ENCODE measurements at regions of chr14 and their contacts with region 1.

Region 1: DNA sequence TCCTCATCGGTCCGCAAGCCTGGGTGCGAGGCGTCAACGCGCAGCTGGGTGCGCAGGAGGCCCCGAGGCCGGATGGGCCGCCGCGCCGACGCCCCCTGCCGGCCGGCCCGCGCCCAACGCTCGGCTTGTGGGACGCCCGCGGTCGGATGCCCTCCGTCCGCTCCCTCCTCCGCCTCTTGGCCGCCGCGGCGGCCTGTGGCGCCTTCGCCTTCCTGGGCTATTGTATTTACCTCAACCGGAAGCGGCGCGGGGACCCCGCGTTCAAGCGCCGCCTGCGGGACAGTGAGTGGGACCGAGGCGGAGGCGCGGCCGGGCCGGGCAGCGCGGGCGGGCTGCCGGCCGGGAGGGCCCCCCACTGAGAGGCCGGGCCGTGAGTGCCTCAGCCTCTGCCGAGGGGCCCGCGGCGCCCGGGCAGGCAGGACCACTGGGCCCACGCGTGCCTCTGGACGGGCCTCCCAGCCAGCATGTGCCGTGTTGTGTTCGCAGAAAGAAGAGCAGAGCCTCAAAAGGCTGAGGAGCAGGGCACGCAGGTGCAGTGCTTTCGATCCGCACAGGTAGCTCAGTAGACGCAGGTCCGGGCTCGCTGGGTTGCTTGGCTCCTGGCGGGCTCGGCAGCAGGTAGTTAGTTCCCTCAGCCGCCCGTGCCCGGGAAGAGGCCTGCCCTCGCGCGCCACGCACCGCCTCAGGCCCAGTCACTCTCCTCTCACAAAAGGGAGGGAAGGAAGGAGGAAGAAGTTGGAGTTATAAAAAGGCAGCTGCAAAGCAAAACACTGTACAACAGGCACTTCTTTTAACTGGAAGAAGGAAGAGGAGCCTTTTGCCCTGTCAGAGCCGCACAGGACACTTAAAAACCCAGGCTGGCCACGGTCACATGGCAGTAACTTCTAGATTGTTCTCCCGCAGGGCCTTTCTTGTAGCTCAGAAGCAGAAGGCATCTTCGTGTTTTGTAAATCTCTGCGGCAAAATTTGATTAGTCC is at the start of gene TOMM20L:
- DNase-seq: peak; percentile 50 to 82 (median 73)
- ATAC-seq: peak; percentile 82 to 88
- H3K4me3 Mint-ChIP-seq: peak within 1 kb of the TSS; percentile 78 to 94 (median 86)
- H3K27ac Mint-ChIP-seq: peak within 1 kb of the TSS; percentile 92 to 98 (median 95)
- H3K4me1 Mint-ChIP-seq: peaks cover 7 to 20% (median 12%) of the 10 kb centered on the region in 4 donors
- H3K27me3 Mint-ChIP-seq: no peaks in the 10 kb centered on the region
- polyA plus RNA-seq, gene TOMM20L: not detected

Region 2: DNA sequence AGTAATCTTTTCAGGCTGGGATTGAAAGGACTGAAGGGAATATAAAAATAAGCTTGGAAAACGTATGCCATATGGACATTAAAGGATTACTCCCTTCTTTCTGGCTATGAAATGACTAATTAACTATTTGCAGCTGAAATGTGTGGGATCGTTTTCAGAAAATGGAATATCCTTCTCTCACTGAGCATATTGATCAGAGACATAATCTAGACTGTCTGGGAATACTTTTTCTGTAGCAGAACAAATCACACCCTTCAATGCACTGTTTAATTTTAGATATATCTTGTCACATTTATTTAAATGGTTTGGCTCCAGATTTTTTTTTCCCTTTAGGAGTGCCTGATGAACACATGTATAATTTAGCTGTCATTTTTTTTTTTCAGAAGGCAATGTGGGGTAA is 206.9 kb before region 1 on chr14:
- POLR2A ChIA-PET with region 1: no interaction called
- DNase-seq: no peak
- ATAC-seq: no peak
- H3K4me3 Mint-ChIP-seq: no peak overlapping the region
- H3K27ac Mint-ChIP-seq: no peak overlapping the region
- H3K4me1 Mint-ChIP-seq: no peaks in the 10 kb centered on the region
- H3K27me3 Mint-ChIP-seq: peaks cover 0 to 13% (median 12%) of the 10 kb centered on the region in 5 donors

Region 3: DNA sequence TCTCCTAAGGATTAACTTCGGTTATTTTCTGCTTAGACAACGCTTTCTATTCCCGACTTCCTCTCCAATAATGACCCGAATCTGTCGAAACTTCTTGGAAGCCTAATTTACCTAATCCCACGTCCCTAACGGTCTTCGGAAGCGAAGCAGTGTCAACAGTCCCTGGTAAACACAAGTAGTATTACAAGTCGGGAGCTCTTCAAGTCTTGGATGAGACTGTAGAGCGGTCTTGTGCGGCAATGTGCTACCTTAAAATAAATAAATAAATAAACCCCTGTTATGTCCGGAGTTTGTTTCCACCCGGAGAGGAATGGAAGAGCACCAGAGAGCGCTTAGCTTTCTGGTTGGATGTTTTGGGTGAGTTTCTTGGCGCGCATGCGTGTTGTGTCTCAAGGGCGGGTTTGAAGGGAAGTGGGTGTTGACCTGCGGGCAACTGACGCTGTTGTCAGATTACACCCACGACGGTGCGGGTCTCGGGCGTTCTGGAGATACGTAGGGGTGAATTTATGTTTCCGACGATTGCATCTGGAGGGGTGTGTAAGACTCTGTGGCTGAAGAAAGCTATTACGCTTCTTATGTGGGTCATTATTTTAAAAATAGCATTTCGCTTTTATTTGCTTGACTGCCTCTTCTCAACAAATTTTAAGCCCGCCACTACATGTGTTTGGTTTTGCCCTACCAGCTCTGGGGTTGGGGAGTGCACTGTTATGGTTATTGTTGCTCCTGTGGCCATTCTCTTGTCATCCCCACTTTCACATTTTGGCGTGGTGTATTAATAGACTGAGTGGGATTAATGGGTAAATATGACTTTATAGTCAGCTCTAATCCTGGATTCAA is 31.4 kb after region 1 on chr14 and contains the starts of genes KIAA0586 and TIMM9:
- POLR2A ChIA-PET with region 1: interaction called, 19 read pairs
- DNase-seq: peak; percentile 85 to 99 (median 95)
- ATAC-seq: peak; percentile 92 to 93
- H3K4me3 Mint-ChIP-seq: peak within 1 kb of the TSS; percentile 78 to 96 (median 90)
- H3K27ac Mint-ChIP-seq: peak within 1 kb of the TSS; percentile 90 to 99 (median 96)
- H3K4me1 Mint-ChIP-seq: peaks cover 10 to 53% (median 43%) of the 10 kb centered on the region in 4 donors
- H3K27me3 Mint-ChIP-seq: peaks cover 0 to 2% (median 0%) of the 10 kb centered on the region in 5 donors
- polyA plus RNA-seq, gene KIAA0586: 19.1 to 30.5 (median 29.6) TPM
- polyA plus RNA-seq, gene TIMM9: 59.6 to 72.2 (median 71.0) TPM

Region 4: GRCh38 chr14:58479975-58480374 is 83.9 kb after region 1 on chr14:
- POLR2A ChIA-PET with region 1: no interaction called
- DNase-seq: no peak
- ATAC-seq: no peak
- H3K4me3 Mint-ChIP-seq: no peak overlapping the region
- H3K27ac Mint-ChIP-seq: peak overlapping the region in 3 of 10 donors; percentile 5 to 72 (median 43)
- H3K4me1 Mint-ChIP-seq: peaks cover 0 to 8% (median 0%) of the 10 kb centered on the region in 4 donors
- H3K27me3 Mint-ChIP-seq: no peaks in the 10 kb centered on the region